Gastrocnemius medialis (tissue), 4 donors: ENCODE measurements at regions of chr11 and their contacts with region 1.

Region 1: DNA sequence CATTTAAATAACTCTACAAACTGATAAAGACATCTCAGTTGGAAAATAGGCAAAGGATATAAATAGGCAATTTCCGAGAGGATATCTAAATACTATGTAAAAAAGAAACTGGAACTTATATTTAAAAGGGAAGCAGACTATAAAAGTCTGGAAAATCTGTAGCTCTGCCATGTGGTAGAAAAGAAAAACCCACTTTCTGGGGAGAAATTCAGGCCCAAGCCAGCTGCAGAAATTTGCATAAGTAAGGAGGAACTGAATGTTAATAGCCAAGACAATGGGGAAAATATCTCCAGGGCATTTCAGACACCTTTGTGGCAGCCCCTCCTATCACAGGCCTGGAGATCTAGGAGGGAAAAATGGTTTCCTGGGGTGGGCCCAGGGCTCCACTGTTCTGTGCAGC is 97.8 kb upstream of the ZBED5 start:
- DNase-seq: no peak
- ATAC-seq: no peak
- H3K4me3 ChIP-seq: no peak overlapping the region
- H3K27ac ChIP-seq: no peak overlapping the region
- H3K4me1 ChIP-seq: no peaks in the 10 kb centered on the region
- H3K27me3 ChIP-seq: no peaks in the 10 kb centered on the region
- CTCF ChIP-seq: no peak
- POLR2A ChIP-seq: no peak

Region 2: GRCh38 chr11:11000579-11001283 is 45.1 kb after region 1 on chr11:
- in situ Hi-C with region 1: loop called in 2 of 4 experiments (anchors 10 kb)
- intact Hi-C with region 1: no loop called
- DNase-seq: no peak
- ATAC-seq: no peak
- H3K4me3 ChIP-seq: no peak overlapping the region
- H3K27ac ChIP-seq: no peak overlapping the region
- H3K4me1 ChIP-seq: no peaks in the 10 kb centered on the region
- H3K27me3 ChIP-seq: peaks cover 0 to 2% (median 0%) of the 10 kb centered on the region in 3 donors
- CTCF ChIP-seq: no peak
- POLR2A ChIP-seq: no peak